ENCODE measurements at regions of chr7 and their contacts with region 1.

Region 1: GRCh38 chr7:78510580-78511188 is 712.1 kb downstream of the PHTF2 start:
- DNase-seq: peak; percentile 28
- ATAC-seq: peak; percentile 65
- H3K4me3 ChIP-seq: no peak overlapping the region
- H3K27ac ChIP-seq: no peak overlapping the region
- H3K4me1 ChIP-seq: no peaks in the 10 kb centered on the region
- H3K27me3 ChIP-seq: no peaks in the 10 kb centered on the region
- CTCF ChIP-seq: peak; percentile 85

Region 2: GRCh38 chr7:78020136-78020873 is 490.4 kb before region 1 on chr7:
- CTCF ChIA-PET with region 1: no interaction called
- POLR2A ChIA-PET with region 1: no interaction called
- in situ Hi-C with region 1: no loop called
- intact Hi-C with region 1: loop called (anchors 10 kb)
- DNase-seq: peak; percentile 74
- ATAC-seq: peak; percentile 74
- H3K4me3 ChIP-seq: peak overlapping the region; percentile 52 to 71
- H3K27ac ChIP-seq: peak overlapping the region; percentile 77
- H3K4me1 ChIP-seq: peaks cover 13% of the 10 kb centered on the region
- H3K27me3 ChIP-seq: peaks cover 29% of the 10 kb centered on the region
- CTCF ChIP-seq: peak; percentile 88

Region 3: GRCh38 chr7:78311181-78311580 is 199.5 kb before region 1 on chr7:
- CTCF ChIA-PET with region 1: no interaction called
- POLR2A ChIA-PET with region 1: no interaction called
- in situ Hi-C with region 1: no loop called
- intact Hi-C with region 1: no loop called
- DNase-seq: no peak
- ATAC-seq: no peak
- H3K4me3 ChIP-seq: no peak overlapping the region
- H3K27ac ChIP-seq: no peak overlapping the region
- H3K4me1 ChIP-seq: no peaks in the 10 kb centered on the region
- H3K27me3 ChIP-seq: no peaks in the 10 kb centered on the region
- CTCF ChIP-seq: no peak

Region 4: GRCh38 chr7:78448911-78449310 is 61.8 kb before region 1 on chr7:
- CTCF ChIA-PET with region 1: no interaction called
- POLR2A ChIA-PET with region 1: no interaction called
- in situ Hi-C with region 1: no loop called
- intact Hi-C with region 1: no loop called
- DNase-seq: no peak
- ATAC-seq: no peak
- H3K4me3 ChIP-seq: no peak overlapping the region
- H3K27ac ChIP-seq: no peak overlapping the region
- H3K4me1 ChIP-seq: no peaks in the 10 kb centered on the region
- H3K27me3 ChIP-seq: peaks cover 15% of the 10 kb centered on the region
- CTCF ChIP-seq: no peak

Region 5: GRCh38 chr7:78479348-78479747 is 31.3 kb before region 1 on chr7:
- CTCF ChIA-PET with region 1: no interaction called
- POLR2A ChIA-PET with region 1: no interaction called
- in situ Hi-C with region 1: no loop called
- intact Hi-C with region 1: no loop called
- DNase-seq: no peak
- ATAC-seq: no peak
- H3K4me3 ChIP-seq: no peak overlapping the region
- H3K27ac ChIP-seq: no peak overlapping the region
- H3K4me1 ChIP-seq: no peaks in the 10 kb centered on the region
- H3K27me3 ChIP-seq: no peaks in the 10 kb centered on the region; the same call in 1 of the 2 replicates
- CTCF ChIP-seq: no peak

Region 6: GRCh38 chr7:78924581-78924980 is 413.9 kb after region 1 on chr7:
- CTCF ChIA-PET with region 1: no interaction called
- POLR2A ChIA-PET with region 1: interaction called, 4 read pairs
- in situ Hi-C with region 1: no loop called
- intact Hi-C with region 1: loop called (anchors 10 kb)
- DNase-seq: no peak
- ATAC-seq: no peak
- H3K4me3 ChIP-seq: no peak overlapping the region
- H3K27ac ChIP-seq: no peak overlapping the region
- H3K4me1 ChIP-seq: no peaks in the 10 kb centered on the region
- H3K27me3 ChIP-seq: no peaks in the 10 kb centered on the region
- CTCF ChIP-seq: no peak; the same call in 1 of the 2 replicates

Measured in Panc1 (cell line).